ENCODE measurements at regions of chr5 and their contacts with region 1.

Region 1: GRCh38 chr5:163915481-163915961 is 410.1 kb downstream of the MAT2B start:
- DNase-seq: peak; percentile 90
- ATAC-seq: peak; percentile 60
- H3K4me3 ChIP-seq: peak overlapping the region; percentile 25 to 69 (median 38)
- H3K4me3 Mint-ChIP-seq: peak overlapping the region; percentile 93
- H3K27ac ChIP-seq: peak overlapping the region; percentile 96 to 97
- H3K27ac Mint-ChIP-seq: peak overlapping the region; percentile 100
- H3K4me1 ChIP-seq: peaks cover 46 to 53% of the 10 kb centered on the region in 2 donors
- H3K4me1 Mint-ChIP-seq: peaks cover 71% of the 10 kb centered on the region
- H3K27me3 ChIP-seq: no peaks in the 10 kb centered on the region
- H3K27me3 Mint-ChIP-seq: no peaks in the 10 kb centered on the region
- CTCF ChIP-seq: no peak

Region 2: GRCh38 chr5:163459922-163460766 is 455.4 kb before region 1 on chr5 and contains the starts of genes HMMR and NUDCD2:
- CTCF ChIA-PET with region 1: no interaction called
- POLR2A ChIA-PET with region 1: interaction called, 5 read pairs
- intact Hi-C with region 1: loop called (anchors 1 kb)
- DNase-seq: peak; percentile 98
- ATAC-seq: peak; percentile 87
- H3K4me3 ChIP-seq: peak within 1 kb of the TSS; percentile 87 to 95 (median 90)
- H3K4me3 Mint-ChIP-seq: peak within 1 kb of the TSS; percentile 91
- H3K27ac ChIP-seq: peak within 1 kb of the TSS; percentile 92
- H3K27ac Mint-ChIP-seq: peak within 1 kb of the TSS; percentile 99
- H3K4me1 ChIP-seq: peaks cover 17 to 32% of the 10 kb centered on the region in 2 donors
- H3K4me1 Mint-ChIP-seq: peaks cover 32% of the 10 kb centered on the region
- H3K27me3 ChIP-seq: no peaks in the 10 kb centered on the region
- H3K27me3 Mint-ChIP-seq: no peaks in the 10 kb centered on the region
- CTCF ChIP-seq: peak; percentile 3
- total RNA-seq, gene HMMR: 1.4 and 1.6 TPM in 2 replicates
- total RNA-seq, gene NUDCD2: 24.4 TPM in 2 replicates

Region 3: GRCh38 chr5:163695830-163696578 is 219.5 kb before region 1 on chr5:
- CTCF ChIA-PET with region 1: interaction called, 18 read pairs
- POLR2A ChIA-PET with region 1: no interaction called
- intact Hi-C with region 1: loop called (anchors 1 kb)
- DNase-seq: peak; percentile 80
- ATAC-seq: peak; percentile 98
- H3K4me3 ChIP-seq: no peak overlapping the region
- H3K4me3 Mint-ChIP-seq: no peak overlapping the region
- H3K27ac ChIP-seq: no peak overlapping the region
- H3K27ac Mint-ChIP-seq: peak overlapping the region; percentile 17
- H3K4me1 ChIP-seq: peaks cover 6 to 7% of the 10 kb centered on the region in 2 donors
- H3K4me1 Mint-ChIP-seq: peaks cover 10% of the 10 kb centered on the region
- H3K27me3 ChIP-seq: no peaks in the 10 kb centered on the region
- H3K27me3 Mint-ChIP-seq: peaks cover 5% of the 10 kb centered on the region
- CTCF ChIP-seq: peak; percentile 88

Region 4: DNA sequence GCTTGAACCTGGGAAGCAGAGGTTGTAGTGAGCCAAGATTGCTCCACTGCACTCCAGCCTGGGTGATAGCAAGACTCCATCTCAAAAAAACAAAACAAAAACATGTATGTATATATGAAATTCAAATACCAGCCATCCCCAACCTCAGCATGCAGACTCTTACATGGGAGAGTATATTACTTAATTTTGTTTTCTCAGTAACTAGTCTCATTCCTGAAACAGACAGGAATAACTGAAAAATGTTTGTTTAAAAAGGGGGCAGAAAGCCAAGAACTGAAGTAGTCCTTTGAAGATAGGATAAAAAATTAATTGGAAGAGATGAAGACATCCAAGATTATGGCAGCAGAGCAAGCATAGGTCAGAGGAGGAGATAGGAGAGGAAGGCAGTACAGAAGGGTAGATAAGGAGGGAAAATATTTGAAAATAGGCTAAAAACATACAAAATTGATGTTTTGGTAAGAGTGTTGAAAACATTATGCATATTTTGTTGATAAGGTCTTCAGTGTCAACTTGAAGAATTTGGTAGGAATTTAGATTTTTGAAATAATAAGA is 100.2 kb before region 1 on chr5:
- CTCF ChIA-PET with region 1: interaction called, 3 read pairs
- POLR2A ChIA-PET with region 1: no interaction called
- intact Hi-C with region 1: loop called (anchors 10 kb)
- DNase-seq: no peak
- ATAC-seq: no peak
- H3K4me3 ChIP-seq: no peak overlapping the region
- H3K4me3 Mint-ChIP-seq: no peak overlapping the region
- H3K27ac ChIP-seq: no peak overlapping the region
- H3K27ac Mint-ChIP-seq: no peak overlapping the region
- H3K4me1 ChIP-seq: no peaks in the 10 kb centered on the region
- H3K4me1 Mint-ChIP-seq: peaks cover 13% of the 10 kb centered on the region
- H3K27me3 ChIP-seq: no peaks in the 10 kb centered on the region
- H3K27me3 Mint-ChIP-seq: no peaks in the 10 kb centered on the region
- CTCF ChIP-seq: no peak

Region 5: GRCh38 chr5:163874431-163874830 is 41.1 kb before region 1 on chr5:
- CTCF ChIA-PET with region 1: interaction called, 3 read pairs
- POLR2A ChIA-PET with region 1: no interaction called
- intact Hi-C with region 1: loop called (anchors 5 kb)
- DNase-seq: no peak
- ATAC-seq: no peak
- H3K4me3 ChIP-seq: no peak overlapping the region
- H3K4me3 Mint-ChIP-seq: no peak overlapping the region
- H3K27ac ChIP-seq: no peak overlapping the region
- H3K27ac Mint-ChIP-seq: no peak overlapping the region
- H3K4me1 ChIP-seq: no peaks in the 10 kb centered on the region
- H3K4me1 Mint-ChIP-seq: peaks cover 6% of the 10 kb centered on the region
- H3K27me3 ChIP-seq: no peaks in the 10 kb centered on the region
- H3K27me3 Mint-ChIP-seq: peaks cover 1% of the 10 kb centered on the region
- CTCF ChIP-seq: no peak

Region 6: DNA sequence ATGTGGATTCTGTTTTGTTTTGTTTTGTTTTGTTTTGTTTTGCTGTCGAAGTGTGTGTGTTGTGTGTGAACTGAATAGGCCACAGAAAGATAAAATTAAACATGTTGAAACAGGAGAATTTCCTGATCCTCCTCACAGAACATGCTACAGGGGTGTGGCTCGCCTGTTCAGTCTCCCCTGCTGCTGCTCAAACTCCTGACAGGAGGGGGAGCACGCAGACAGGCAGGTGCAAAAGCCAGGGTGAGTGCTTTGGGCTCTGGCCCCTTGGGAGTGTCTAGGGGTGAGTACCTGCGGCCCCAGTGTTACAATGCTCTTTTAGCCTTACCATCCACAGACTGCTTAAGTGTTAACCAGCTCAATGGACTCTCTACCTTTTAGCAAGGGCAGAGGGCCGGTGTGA is 63.4 kb after region 1 on chr5:
- CTCF ChIA-PET with region 1: no interaction called
- POLR2A ChIA-PET with region 1: no interaction called
- intact Hi-C with region 1: loop called (anchors 5 kb)
- DNase-seq: peak; percentile 16
- ATAC-seq: peak; percentile 61
- H3K4me3 ChIP-seq: no peak overlapping the region
- H3K4me3 Mint-ChIP-seq: no peak overlapping the region
- H3K27ac ChIP-seq: no peak overlapping the region
- H3K27ac Mint-ChIP-seq: no peak overlapping the region
- H3K4me1 ChIP-seq: no peaks in the 10 kb centered on the region
- H3K4me1 Mint-ChIP-seq: peaks cover 8% of the 10 kb centered on the region
- H3K27me3 ChIP-seq: no peaks in the 10 kb centered on the region
- H3K27me3 Mint-ChIP-seq: no peaks in the 10 kb centered on the region
- CTCF ChIP-seq: no peak

Region 7: DNA sequence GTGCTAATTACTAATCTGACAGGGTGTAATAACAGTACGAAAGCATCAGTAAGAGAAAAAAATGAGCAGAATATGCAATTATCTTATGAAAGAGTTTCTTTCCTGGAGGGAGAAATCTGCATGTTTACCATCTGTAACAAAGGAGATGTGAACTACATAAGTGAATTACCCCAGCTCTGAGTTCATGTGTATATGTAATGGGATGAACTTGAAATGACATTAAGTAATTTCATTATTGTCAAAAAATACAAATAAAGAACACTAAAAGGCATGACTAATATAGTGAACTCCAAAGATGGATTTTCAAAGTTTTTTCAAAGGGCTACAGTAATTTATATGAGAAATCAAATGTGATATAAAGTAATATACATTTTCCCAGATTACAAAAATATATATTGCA is 533.9 kb after region 1 on chr5:
- CTCF ChIA-PET with region 1: no interaction called
- POLR2A ChIA-PET with region 1: no interaction called
- intact Hi-C with region 1: no loop called
- DNase-seq: no peak
- ATAC-seq: no peak
- H3K4me3 ChIP-seq: no peak overlapping the region
- H3K4me3 Mint-ChIP-seq: no peak overlapping the region
- H3K27ac ChIP-seq: no peak overlapping the region
- H3K27ac Mint-ChIP-seq: no peak overlapping the region
- H3K4me1 ChIP-seq: no peaks in the 10 kb centered on the region
- H3K4me1 Mint-ChIP-seq: no peaks in the 10 kb centered on the region
- H3K27me3 ChIP-seq: no peaks in the 10 kb centered on the region
- H3K27me3 Mint-ChIP-seq: no peaks in the 10 kb centered on the region
- CTCF ChIP-seq: no peak

Measured in B cell (primary cell).